ENCODE measurements at regions of chr4 and their contacts with region 1.

Region 1: DNA sequence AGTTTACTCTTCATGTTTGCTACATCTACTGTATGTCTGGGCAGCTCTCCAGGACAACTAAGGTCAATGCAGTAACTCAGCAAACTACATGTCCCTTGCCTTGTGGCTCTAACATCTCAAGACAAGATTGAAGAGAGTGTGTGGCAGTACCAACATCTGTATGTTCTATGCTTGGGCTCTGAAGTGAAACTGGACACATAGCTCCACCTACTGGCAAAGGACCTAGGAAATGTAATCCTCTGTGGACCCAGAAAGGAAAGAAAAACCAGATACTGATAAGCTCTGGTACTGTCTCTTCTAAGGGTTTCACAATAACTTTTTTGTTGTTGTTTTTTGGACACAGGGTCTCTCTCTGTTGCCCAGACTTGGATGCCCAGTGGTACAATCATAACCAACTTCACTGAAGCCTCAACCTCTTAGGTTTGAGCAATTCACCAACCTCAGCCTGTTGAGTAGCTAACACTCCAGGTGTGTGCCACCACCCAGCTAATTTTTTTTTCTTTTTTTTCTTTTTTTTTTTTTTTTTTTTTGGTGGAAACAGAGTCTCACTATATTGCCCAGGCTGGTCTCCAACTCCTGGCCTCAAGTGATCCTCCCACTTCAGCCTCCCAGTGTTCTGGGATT is 64.1 kb downstream of the QDPR start:
- DNase-seq: peak; percentile 31 to 74 (median 46)
- ATAC-seq: peak; percentile 99
- H3K4me3 ChIP-seq: no peak overlapping the region
- H3K27ac ChIP-seq: no peak overlapping the region
- H3K4me1 ChIP-seq: no peaks in the 10 kb centered on the region
- H3K27me3 ChIP-seq: no peaks in the 10 kb centered on the region
- CTCF ChIP-seq: peak; percentile 66 to 85 (median 72); a peak in 5 of 6 replicates
- EP300 ChIP-seq: no peak
- POLR2A ChIP-seq: no peak
- RAD21 ChIP-seq: peak; percentile 66 to 79

Region 2: GRCh38 chr4:16916719-16917337 is 531.0 kb before region 1 on chr4:
- CTCF ChIA-PET with region 1: no interaction called
- POLR2A ChIA-PET with region 1: no interaction called
- in situ Hi-C with region 1: no loop called
- intact Hi-C with region 1: loop called (anchors 5 kb)
- DNase-seq: peak; percentile 68 to 81 (median 76)
- ATAC-seq: peak; percentile 100
- H3K4me3 ChIP-seq: no peak overlapping the region
- H3K27ac ChIP-seq: no peak overlapping the region
- H3K4me1 ChIP-seq: no peaks in the 10 kb centered on the region
- H3K27me3 ChIP-seq: no peaks in the 10 kb centered on the region
- CTCF ChIP-seq: peak; percentile 96 to 100 (median 99)
- EP300 ChIP-seq: no peak
- POLR2A ChIP-seq: no peak
- RAD21 ChIP-seq: peak; percentile 46 to 76

Region 3: GRCh38 chr4:17332478-17332877 is 115.3 kb before region 1 on chr4:
- CTCF ChIA-PET with region 1: no interaction called
- POLR2A ChIA-PET with region 1: no interaction called
- in situ Hi-C with region 1: no loop called
- intact Hi-C with region 1: no loop called
- DNase-seq: no peak
- ATAC-seq: no peak
- H3K4me3 ChIP-seq: no peak overlapping the region
- H3K27ac ChIP-seq: no peak overlapping the region
- H3K4me1 ChIP-seq: no peaks in the 10 kb centered on the region
- H3K27me3 ChIP-seq: peaks cover 0 to 18% of the 10 kb centered on the region in 2 experiments; a peak in 3 of 5 replicates
- CTCF ChIP-seq: no peak
- EP300 ChIP-seq: no peak
- POLR2A ChIP-seq: no peak
- RAD21 ChIP-seq: no peak

Region 4: DNA sequence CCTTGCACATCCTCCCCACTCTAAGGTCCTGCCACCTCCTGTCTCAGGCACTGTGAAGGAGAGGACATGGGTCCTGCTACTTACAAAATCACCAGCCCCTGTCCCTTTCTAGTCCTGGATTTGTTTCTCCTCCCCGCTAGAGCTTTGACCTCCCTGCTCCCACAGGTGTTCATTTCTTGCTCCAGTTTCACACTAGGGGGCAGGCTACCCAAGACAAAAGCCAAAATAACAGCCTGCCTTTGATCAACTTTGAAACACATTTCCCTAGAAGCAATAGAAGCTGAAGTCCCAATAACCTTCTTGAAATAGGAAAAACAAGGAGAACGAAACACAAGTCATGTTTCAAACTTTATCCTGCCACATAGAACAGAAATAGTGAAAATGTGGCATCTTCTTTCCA is 100.3 kb before region 1 on chr4:
- CTCF ChIA-PET with region 1: interaction called, 5 read pairs
- POLR2A ChIA-PET with region 1: no interaction called
- in situ Hi-C with region 1: no loop called
- intact Hi-C with region 1: loop called (anchors 1 kb)
- DNase-seq: peak; percentile 15 to 46 (median 30)
- ATAC-seq: peak; percentile 77
- H3K4me3 ChIP-seq: no peak overlapping the region
- H3K27ac ChIP-seq: no peak overlapping the region
- H3K4me1 ChIP-seq: no peaks in the 10 kb centered on the region
- H3K27me3 ChIP-seq: no peaks in the 10 kb centered on the region
- CTCF ChIP-seq: peak; percentile 55 to 71 (median 67)
- EP300 ChIP-seq: no peak
- POLR2A ChIP-seq: no peak
- RAD21 ChIP-seq: peak; percentile 48 to 68

Region 5: DNA sequence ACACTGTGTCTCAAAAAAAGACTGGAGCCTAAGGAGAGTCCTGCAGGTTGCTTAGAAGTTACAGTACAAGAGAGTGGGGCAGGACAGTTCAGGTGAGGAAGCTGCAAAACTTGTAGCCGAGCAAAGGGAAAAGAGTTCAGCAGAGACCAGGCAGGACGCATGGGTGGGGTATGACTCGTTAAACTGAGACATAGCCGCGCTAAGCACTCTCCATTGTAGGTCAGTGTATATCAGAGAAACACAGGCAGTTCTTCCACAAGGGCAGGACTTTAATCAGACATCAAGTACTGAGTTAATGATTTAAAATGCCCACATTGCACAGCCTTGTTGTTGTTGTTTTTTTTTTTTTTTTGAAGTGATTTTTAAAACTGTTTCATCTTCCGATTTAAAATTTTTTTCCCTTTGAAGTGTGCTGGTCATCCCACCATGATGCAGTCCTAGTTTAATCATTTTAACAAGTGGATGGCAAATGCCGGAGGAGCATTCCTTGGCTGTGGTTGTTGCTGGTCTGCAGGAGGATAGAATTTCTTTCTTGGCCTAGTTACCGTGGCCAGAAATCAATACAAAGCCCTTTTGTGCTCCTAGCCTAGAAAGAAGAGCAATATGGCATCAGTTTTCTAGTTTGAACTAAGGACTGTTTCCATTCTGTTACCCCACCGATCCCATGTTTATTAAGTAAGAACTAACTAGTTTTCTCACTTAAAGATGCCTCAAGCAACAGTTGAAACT is 139.5 kb after region 1 on chr4:
- CTCF ChIA-PET with region 1: no interaction called
- POLR2A ChIA-PET with region 1: no interaction called
- in situ Hi-C with region 1: no loop called
- intact Hi-C with region 1: no loop called
- DNase-seq: no peak
- ATAC-seq: no peak
- H3K4me3 ChIP-seq: no peak overlapping the region
- H3K27ac ChIP-seq: no peak overlapping the region
- H3K4me1 ChIP-seq: no peaks in the 10 kb centered on the region
- H3K27me3 ChIP-seq: no peaks in the 10 kb centered on the region
- CTCF ChIP-seq: no peak
- EP300 ChIP-seq: no peak
- POLR2A ChIP-seq: no peak
- RAD21 ChIP-seq: no peak

Measured in K562 (cell line).